Activated naive CD4-positive, alpha-beta T cell treated with anti-CD3 and anti-CD28 coated beads for 36 hours (primary cell): ENCODE measurements at regions of chr7 and their contacts with region 1.

Region 1: GRCh38 chr7:123705211-123705901 is 43.4 kb downstream of the WASL start:
- DNase-seq: no peak
- H3K4me3 Mint-ChIP-seq: no peak overlapping the region
- H3K27ac Mint-ChIP-seq: no peak overlapping the region
- H3K4me1 Mint-ChIP-seq: peaks cover 1% of the 10 kb centered on the region
- H3K27me3 Mint-ChIP-seq: no peaks in the 10 kb centered on the region

Region 2: GRCh38 chr7:123580406-123581161 is 124.8 kb before region 1 on chr7:
- CTCF ChIA-PET with region 1: interaction called, 3 read pairs
- intact Hi-C with region 1: loop called (anchors 1 kb)
- DNase-seq: peak; percentile 12
- H3K4me3 Mint-ChIP-seq: no peak overlapping the region
- H3K27ac Mint-ChIP-seq: no peak overlapping the region
- H3K4me1 Mint-ChIP-seq: no peaks in the 10 kb centered on the region
- H3K27me3 Mint-ChIP-seq: peaks cover 9% of the 10 kb centered on the region

Region 3: DNA sequence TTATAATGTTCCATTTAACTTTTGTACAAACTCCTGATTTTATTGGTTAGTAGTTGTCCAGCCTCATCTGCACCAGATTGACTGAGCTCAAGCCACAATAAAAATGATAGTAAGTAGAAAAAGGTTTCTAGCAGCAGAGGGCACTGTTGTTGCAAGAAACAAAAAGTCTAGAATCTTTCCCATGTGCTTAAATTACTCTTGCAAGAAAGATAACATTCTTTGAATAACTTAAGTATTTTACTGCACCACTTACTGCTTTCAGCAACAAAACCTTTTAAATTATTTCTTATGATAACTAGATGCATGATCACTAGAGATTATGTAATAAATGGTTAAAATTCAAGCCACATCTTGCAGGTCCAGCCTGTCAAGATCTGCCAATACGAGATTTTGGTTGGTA is 22.7 kb before region 1 on chr7:
- CTCF ChIA-PET with region 1: interaction called, 4 read pairs
- intact Hi-C with region 1: loop called (anchors 2 kb)
- DNase-seq: peak; percentile 31
- H3K4me3 Mint-ChIP-seq: no peak overlapping the region
- H3K27ac Mint-ChIP-seq: no peak overlapping the region
- H3K4me1 Mint-ChIP-seq: no peaks in the 10 kb centered on the region
- H3K27me3 Mint-ChIP-seq: no peaks in the 10 kb centered on the region